ENCODE measurements at regions of chr9 and their contacts with region 1.

Region 1: DNA sequence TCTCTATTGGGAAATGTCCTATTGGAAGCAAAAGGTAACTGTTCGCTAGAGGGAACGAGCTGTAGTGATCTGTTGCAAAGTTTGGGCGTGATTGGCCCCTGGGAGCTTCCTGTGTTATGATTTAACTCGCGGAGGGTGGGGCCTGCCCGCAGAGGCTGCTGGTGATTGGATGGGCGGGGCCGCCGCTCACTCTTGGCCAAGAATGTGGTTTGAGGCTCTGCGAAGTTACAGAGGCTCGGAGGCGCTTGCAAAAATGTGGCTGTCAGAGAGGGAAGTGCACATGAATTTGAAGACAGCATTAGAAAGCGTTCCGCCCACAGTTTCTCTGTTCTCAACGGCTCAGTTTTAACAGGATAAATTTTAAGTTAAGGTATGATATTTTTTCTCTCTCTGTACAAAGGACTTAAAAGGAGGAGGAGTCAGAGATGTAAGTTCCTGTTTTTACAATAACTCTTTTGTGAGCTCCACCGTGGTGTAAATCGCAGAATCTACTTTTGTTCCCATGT is 46.9 kb downstream of the CNTRL start:
- DNase-seq: peak; percentile 94 to 98 (median 96)
- H3K4me3 ChIP-seq: peak overlapping the region; percentile 55 to 67
- H3K4me3 Mint-ChIP-seq: peak overlapping the region; percentile 88 to 94 (median 90)
- H3K27ac ChIP-seq: peak overlapping the region; percentile 67
- H3K27ac Mint-ChIP-seq: peak overlapping the region; percentile 87 to 93 (median 91)
- H3K4me1 ChIP-seq: peaks cover 56% of the 10 kb centered on the region
- H3K4me1 Mint-ChIP-seq: peaks cover 32 to 61% (median 44%) of the 10 kb centered on the region in 4 donors
- H3K27me3 ChIP-seq: no peaks in the 10 kb centered on the region
- H3K27me3 Mint-ChIP-seq: no peaks in the 10 kb centered on the region

Region 2: GRCh38 chr9:119500072-119500771 is 1621.4 kb before region 1 on chr9:
- CTCF ChIA-PET with region 1: no interaction called
- POLR2A ChIA-PET with region 1: no interaction called
- intact Hi-C with region 1: no loop called
- DNase-seq: no peak
- H3K4me3 ChIP-seq: no peak overlapping the region
- H3K4me3 Mint-ChIP-seq: no peak overlapping the region
- H3K27ac ChIP-seq: no peak overlapping the region
- H3K27ac Mint-ChIP-seq: peak overlapping the region in 1 of 7 donors; percentile 47
- H3K4me1 ChIP-seq: no peaks in the 10 kb centered on the region
- H3K4me1 Mint-ChIP-seq: no peaks in the 10 kb centered on the region
- H3K27me3 ChIP-seq: no peaks in the 10 kb centered on the region
- H3K27me3 Mint-ChIP-seq: peaks cover 0 to 1% of the 10 kb centered on the region in 2 donors

Region 3: GRCh38 chr9:120655005-120655622 is 466.5 kb before region 1 on chr9:
- CTCF ChIA-PET with region 1: no interaction called
- POLR2A ChIA-PET with region 1: no interaction called
- intact Hi-C with region 1: no loop called
- DNase-seq: no peak
- H3K4me3 ChIP-seq: no peak overlapping the region
- H3K4me3 Mint-ChIP-seq: no peak overlapping the region
- H3K27ac ChIP-seq: no peak overlapping the region
- H3K27ac Mint-ChIP-seq: no peak overlapping the region
- H3K4me1 ChIP-seq: no peaks in the 10 kb centered on the region
- H3K4me1 Mint-ChIP-seq: peaks cover 0 to 10% (median 2%) of the 10 kb centered on the region in 4 donors
- H3K27me3 ChIP-seq: no peaks in the 10 kb centered on the region
- H3K27me3 Mint-ChIP-seq: no peaks in the 10 kb centered on the region

Region 4: DNA sequence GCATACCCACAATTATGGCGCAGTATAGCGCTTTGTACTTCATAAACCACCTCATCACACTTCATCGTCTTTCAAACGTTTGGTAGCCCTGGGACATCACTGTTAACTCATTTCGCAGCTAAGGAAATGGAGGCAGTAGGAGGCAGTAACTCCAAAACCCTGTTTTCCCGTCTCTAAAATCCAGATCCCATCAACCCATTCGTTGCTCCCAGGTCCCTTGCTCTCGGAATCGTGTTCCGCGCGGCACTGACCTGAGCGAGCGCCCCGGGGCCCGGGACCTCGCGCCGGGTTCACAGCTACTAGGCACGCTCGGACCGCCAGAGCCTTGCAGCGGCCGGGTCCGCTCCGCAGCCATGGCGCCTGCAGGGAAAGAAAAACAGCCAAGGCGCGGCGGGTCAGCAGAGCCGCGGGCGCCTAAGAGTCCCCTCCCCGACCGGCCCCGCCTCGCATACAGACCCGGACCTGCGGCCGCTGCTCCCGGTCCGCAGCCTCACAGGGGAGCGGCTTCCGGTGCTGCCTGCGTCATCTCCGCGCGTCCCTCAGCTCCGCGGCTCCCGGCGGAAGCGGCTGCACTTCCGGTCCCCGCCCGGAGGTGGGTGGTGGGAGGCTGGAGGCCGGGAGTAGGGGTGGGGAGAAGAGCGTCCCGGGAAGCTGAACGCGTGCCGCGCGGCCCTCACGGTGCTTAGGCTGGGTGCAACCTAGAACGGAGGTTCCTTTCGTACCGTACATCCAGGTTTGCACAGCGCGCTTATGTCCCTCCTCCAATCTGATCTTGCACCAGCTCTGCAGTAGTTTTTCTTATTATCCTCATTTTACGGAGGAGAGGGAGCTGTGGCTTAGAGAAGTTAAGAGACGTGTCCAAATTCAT is 328.5 kb before region 1 on chr9 and contains the start of gene FBXW2:
- CTCF ChIA-PET with region 1: no interaction called
- POLR2A ChIA-PET with region 1: interaction called, 10 read pairs
- intact Hi-C with region 1: no loop called
- DNase-seq: peak; percentile 74 to 83 (median 78)
- H3K4me3 ChIP-seq: peak within 1 kb of the TSS; percentile 82 to 94
- H3K4me3 Mint-ChIP-seq: peak within 1 kb of the TSS; percentile 89 to 98 (median 92)
- H3K27ac ChIP-seq: peak within 1 kb of the TSS; percentile 77
- H3K27ac Mint-ChIP-seq: peak within 1 kb of the TSS; percentile 90 to 97 (median 93)
- H3K4me1 ChIP-seq: peaks cover 58% of the 10 kb centered on the region
- H3K4me1 Mint-ChIP-seq: peaks cover 39 to 62% (median 50%) of the 10 kb centered on the region in 4 donors
- H3K27me3 ChIP-seq: no peaks in the 10 kb centered on the region
- H3K27me3 Mint-ChIP-seq: no peaks in the 10 kb centered on the region
- total RNA-seq, gene FBXW2: 73.7 to 77.8 TPM

Region 5: GRCh38 chr9:121074635-121075385 is 46.8 kb before region 1 on chr9 and contains the start of gene CNTRL:
- CTCF ChIA-PET with region 1: interaction called, 8 read pairs
- POLR2A ChIA-PET with region 1: interaction called, 8 read pairs
- intact Hi-C with region 1: loop called (anchors 1 kb)
- DNase-seq: peak; percentile 81 to 92 (median 84)
- H3K4me3 ChIP-seq: peak within 1 kb of the TSS; percentile 72 to 87
- H3K4me3 Mint-ChIP-seq: peak within 1 kb of the TSS; percentile 82 to 100 (median 98)
- H3K27ac ChIP-seq: peak within 1 kb of the TSS; percentile 90
- H3K27ac Mint-ChIP-seq: peak within 1 kb of the TSS; percentile 78 to 99 (median 98)
- H3K4me1 ChIP-seq: peaks cover 37% of the 10 kb centered on the region
- H3K4me1 Mint-ChIP-seq: peaks cover 34 to 66% (median 53%) of the 10 kb centered on the region in 4 donors
- H3K27me3 ChIP-seq: no peaks in the 10 kb centered on the region
- H3K27me3 Mint-ChIP-seq: no peaks in the 10 kb centered on the region
- total RNA-seq, gene CNTRL: 119 to 122 TPM

Region 6: DNA sequence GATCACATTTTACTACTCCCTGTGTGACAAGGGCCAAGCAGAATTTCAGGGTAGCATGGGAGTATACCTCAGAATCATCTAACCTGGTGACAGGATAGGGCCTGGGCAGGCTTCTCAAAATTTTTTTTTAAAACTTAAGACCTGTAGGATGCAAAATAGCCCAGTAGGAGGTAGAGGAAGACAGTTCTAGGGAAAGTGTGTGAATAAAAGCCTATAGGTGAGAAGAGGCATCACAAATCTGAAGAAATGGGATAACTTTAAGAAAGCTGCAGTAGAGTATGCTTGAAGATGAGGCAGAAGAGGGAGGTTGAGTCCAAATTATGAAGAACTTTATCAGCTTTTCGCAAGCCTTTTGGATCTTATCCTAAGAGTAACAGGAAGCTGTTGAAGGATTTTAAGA is 14.6 kb before region 1 on chr9:
- CTCF ChIA-PET with region 1: interaction called, 18 read pairs
- POLR2A ChIA-PET with region 1: interaction called, 12 read pairs
- intact Hi-C with region 1: loop called (anchors 1 kb)
- DNase-seq: peak in 4 of 5 donors; percentile 37 to 48 (median 42)
- H3K4me3 ChIP-seq: no peak overlapping the region
- H3K4me3 Mint-ChIP-seq: no peak overlapping the region
- H3K27ac ChIP-seq: no peak overlapping the region
- H3K27ac Mint-ChIP-seq: peak overlapping the region in 6 of 7 donors; percentile 9 to 80 (median 44)
- H3K4me1 ChIP-seq: no peaks in the 10 kb centered on the region
- H3K4me1 Mint-ChIP-seq: peaks cover 20 to 37% (median 22%) of the 10 kb centered on the region in 4 donors
- H3K27me3 ChIP-seq: no peaks in the 10 kb centered on the region
- H3K27me3 Mint-ChIP-seq: no peaks in the 10 kb centered on the region

Region 7: DNA sequence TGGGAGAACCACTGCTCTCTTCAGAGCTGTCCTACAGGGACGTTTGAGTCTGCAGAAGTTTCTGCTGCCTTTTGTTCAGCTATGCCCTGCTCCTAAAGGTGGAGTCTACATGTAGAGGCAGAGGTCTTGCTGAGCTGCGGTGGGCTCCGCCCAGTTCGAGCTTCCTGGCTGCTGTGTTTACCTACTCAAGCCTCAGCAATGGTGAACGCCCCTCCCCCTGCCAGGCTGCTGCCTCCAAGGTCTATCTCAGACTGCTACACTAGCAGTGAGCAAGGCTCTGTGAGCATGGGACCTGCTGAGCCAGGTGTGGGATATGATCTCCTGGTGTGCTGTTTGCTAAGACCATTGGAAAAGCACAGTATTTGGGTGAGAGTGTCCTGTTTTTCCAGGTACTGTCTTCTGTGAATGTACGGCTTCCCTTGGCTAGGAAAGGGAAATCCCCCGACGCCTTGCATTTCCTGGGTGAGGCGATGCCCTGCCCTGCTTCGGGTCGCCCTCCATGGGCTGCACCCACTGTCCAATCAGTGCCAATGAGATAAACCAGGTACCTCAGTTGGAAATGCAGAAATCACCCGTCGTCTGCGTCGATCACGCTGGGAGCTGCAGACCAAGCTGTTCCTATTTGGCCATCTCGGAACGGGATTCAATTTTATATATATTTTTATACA is 11.6 kb after region 1 on chr9:
- CTCF ChIA-PET with region 1: interaction called, 46 read pairs
- POLR2A ChIA-PET with region 1: interaction called, 104 read pairs
- intact Hi-C with region 1: loop called (anchors 1 kb)
- DNase-seq: peak; percentile 76 to 91 (median 81)
- H3K4me3 ChIP-seq: peak overlapping the region; percentile 21 to 48
- H3K4me3 Mint-ChIP-seq: peak overlapping the region; percentile 68 to 91 (median 77)
- H3K27ac ChIP-seq: peak overlapping the region; percentile 44
- H3K27ac Mint-ChIP-seq: peak overlapping the region; percentile 77 to 96 (median 87)
- H3K4me1 ChIP-seq: peaks cover 45% of the 10 kb centered on the region
- H3K4me1 Mint-ChIP-seq: peaks cover 52 to 79% (median 65%) of the 10 kb centered on the region in 4 donors
- H3K27me3 ChIP-seq: no peaks in the 10 kb centered on the region
- H3K27me3 Mint-ChIP-seq: no peaks in the 10 kb centered on the region

Region 8: DNA sequence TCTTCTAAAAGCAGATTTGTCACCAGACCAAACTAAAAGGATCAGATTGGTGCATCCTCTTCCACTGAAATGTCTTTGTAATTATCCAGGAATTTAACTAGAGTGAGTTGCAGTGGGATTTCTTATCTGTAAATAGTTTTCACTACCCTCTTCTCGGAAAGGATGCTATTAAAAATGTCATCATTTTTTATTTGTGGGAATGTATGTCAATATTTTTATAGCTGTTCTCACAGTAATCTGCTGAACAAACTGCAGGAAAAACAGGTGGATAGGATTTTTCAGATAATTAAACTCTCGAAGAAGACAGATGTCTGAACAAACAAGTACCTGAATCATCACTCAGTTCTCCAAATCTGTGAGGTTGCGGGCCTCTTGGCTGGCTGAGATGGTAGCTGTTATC is 17.3 kb after region 1 on chr9:
- CTCF ChIA-PET with region 1: interaction called, 46 read pairs
- POLR2A ChIA-PET with region 1: interaction called, 104 read pairs
- intact Hi-C with region 1: no loop called
- DNase-seq: no peak
- H3K4me3 ChIP-seq: no peak overlapping the region
- H3K4me3 Mint-ChIP-seq: no peak overlapping the region
- H3K27ac ChIP-seq: no peak overlapping the region
- H3K27ac Mint-ChIP-seq: peak overlapping the region in 5 of 7 donors; percentile 2 to 72 (median 60)
- H3K4me1 ChIP-seq: peaks cover 21% of the 10 kb centered on the region
- H3K4me1 Mint-ChIP-seq: peaks cover 14 to 28% (median 22%) of the 10 kb centered on the region in 4 donors
- H3K27me3 ChIP-seq: no peaks in the 10 kb centered on the region
- H3K27me3 Mint-ChIP-seq: no peaks in the 10 kb centered on the region

Region 9: GRCh38 chr9:121156263-121156731 is 34.7 kb after region 1 on chr9:
- CTCF ChIA-PET with region 1: interaction called, 6 read pairs
- POLR2A ChIA-PET with region 1: interaction called, 9 read pairs
- intact Hi-C with region 1: loop called (anchors 5 kb)
- DNase-seq: peak in 3 of 5 donors; percentile 11 to 39 (median 17)
- H3K4me3 ChIP-seq: no peak overlapping the region
- H3K4me3 Mint-ChIP-seq: peak overlapping the region in 1 of 8 donors; percentile 67
- H3K27ac ChIP-seq: no peak overlapping the region
- H3K27ac Mint-ChIP-seq: peak overlapping the region in 6 of 7 donors; percentile 34 to 79 (median 60)
- H3K4me1 ChIP-seq: peaks cover 13% of the 10 kb centered on the region
- H3K4me1 Mint-ChIP-seq: peaks cover 12 to 27% (median 20%) of the 10 kb centered on the region in 4 donors
- H3K27me3 ChIP-seq: no peaks in the 10 kb centered on the region
- H3K27me3 Mint-ChIP-seq: no peaks in the 10 kb centered on the region

Measured in CD4-positive, alpha-beta memory T cell (primary cell).